A549 (cell line): ENCODE measurements at regions of chr17 and their contacts with region 1.

Region 1: DNA sequence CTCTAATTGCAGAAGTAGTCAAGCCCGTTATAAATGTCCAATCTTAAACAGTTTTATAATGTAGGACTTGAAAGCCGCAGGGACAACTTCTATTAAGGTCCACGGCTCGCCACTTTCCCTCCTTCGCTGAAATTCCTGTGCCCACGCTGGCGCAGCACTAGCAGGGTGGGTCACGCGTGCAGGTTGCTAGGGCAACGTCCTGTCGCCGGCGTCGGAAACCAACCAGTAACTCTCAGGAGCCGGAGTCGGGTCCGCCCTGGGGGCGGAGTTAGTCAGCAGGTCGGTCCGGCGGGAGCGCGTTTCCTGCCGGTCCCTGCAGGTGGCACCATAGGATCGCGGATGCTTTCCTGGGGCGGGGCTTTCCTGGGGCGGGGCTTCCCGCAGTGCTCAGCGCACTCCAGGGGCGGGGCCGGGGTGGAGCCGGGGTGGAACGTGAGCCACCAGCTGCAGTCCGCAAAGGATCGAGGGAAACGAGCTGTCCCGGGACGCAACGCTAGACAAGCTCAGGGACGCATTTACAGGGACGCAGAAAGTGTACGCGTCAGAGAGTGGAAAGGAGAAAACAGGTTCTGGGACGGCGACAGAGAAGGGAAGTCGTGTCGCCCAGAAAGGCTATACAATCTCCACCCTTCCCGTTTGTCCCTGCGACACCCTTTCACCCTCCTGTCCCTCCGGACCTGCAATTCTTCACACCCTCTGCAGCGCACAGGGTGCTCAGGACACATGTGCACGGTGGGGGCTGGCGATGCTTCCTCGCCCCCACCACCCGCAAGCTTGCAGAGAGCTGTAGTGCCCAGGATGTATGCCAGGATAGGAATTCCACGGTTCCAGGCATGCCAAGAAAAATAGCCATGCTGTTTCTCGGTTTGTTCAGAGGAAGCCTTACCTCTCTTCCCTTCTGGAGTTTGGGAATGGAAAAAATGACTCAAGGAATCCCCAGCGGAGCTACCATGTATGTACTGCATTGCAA is 12.4 kb downstream of the COPZ2 start:
- DNase-seq: peak; percentile 95 to 98
- ATAC-seq: peak; percentile 71 to 82
- H3K4me3 ChIP-seq: peak overlapping the region; percentile 43
- H3K27ac ChIP-seq: peak overlapping the region; percentile 71 to 88
- H3K4me1 ChIP-seq: peaks cover 27% of the 10 kb centered on the region
- CTCF ChIP-seq: peak; percentile 96
- EP300 ChIP-seq: no peak
- POLR2A ChIP-seq: peak; percentile 87
- RAD21 ChIP-seq: peak; percentile 96 to 100

Region 2: DNA sequence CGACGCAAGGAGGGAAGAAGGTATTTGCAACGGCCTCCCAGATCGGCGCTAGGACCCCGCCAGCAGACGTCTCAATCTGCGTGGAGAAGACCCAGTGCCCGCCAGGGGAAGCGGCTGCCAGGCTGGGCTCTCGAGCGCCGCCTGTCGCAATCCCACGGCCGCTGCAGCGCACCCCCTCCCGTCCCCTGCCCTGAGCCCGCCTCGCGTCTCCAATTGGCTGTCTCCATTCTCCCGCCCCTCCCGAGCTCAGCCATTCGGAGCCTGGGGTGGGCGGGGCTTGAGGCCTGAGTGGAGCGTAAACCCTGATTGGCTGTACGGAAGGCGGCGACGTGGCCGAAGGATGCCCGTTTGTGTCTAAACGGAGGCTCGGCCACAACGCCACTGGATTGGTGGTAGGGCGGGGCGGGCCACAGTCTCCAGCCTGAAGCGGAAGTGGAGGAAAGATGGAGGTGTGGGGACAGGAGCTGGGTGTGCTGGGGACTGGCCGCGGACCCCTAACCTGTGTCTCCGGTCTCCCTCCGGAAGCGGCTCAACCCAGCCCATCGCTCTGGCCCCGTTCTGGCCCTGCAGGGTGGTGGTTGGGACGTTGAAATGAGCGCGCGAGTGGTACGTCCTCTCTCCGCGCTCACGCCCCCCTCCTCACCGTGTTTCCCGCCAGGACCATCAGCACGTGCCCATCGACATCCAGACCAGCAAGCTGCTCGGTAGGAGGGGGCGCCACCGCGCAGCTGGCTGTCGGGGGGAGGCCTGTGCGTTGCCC is 54.3 kb before region 1 on chr17 and contains the start of gene CDK5RAP3:
- CTCF ChIA-PET with region 1: interaction called, 766 read pairs
- POLR2A ChIA-PET with region 1: interaction called, 5 read pairs
- DNase-seq: peak; percentile 96 to 100
- ATAC-seq: peak; percentile 96 to 97
- H3K4me3 ChIP-seq: peak within 1 kb of the TSS; percentile 77
- H3K27ac ChIP-seq: peak within 1 kb of the TSS; percentile 85 to 90
- H3K4me1 ChIP-seq: peaks cover 47% of the 10 kb centered on the region
- CTCF ChIP-seq: peak; percentile 92
- EP300 ChIP-seq: no peak
- POLR2A ChIP-seq: peak; percentile 88
- RAD21 ChIP-seq: peak; percentile 74 to 89
- polyA plus RNA-seq, gene CDK5RAP3: 124 and 179 TPM in 2 replicates

Region 3: GRCh38 chr17:48047741-48048383 is 22.6 kb after region 1 on chr17 and contains the start of gene NFE2L1:
- CTCF ChIA-PET with region 1: interaction called, 1,398 read pairs
- POLR2A ChIA-PET with region 1: interaction called, 59 read pairs
- DNase-seq: peak; percentile 98 to 100
- ATAC-seq: peak; percentile 90 to 95
- H3K4me3 ChIP-seq: peak within 1 kb of the TSS; percentile 79
- H3K27ac ChIP-seq: peak within 1 kb of the TSS; percentile 95 to 99
- H3K4me1 ChIP-seq: peaks cover 52% of the 10 kb centered on the region
- CTCF ChIP-seq: no peak
- EP300 ChIP-seq: no peak
- POLR2A ChIP-seq: peak; percentile 61
- RAD21 ChIP-seq: no peak
- polyA plus RNA-seq, gene NFE2L1: 241 and 283 TPM in 2 replicates

Region 4: DNA sequence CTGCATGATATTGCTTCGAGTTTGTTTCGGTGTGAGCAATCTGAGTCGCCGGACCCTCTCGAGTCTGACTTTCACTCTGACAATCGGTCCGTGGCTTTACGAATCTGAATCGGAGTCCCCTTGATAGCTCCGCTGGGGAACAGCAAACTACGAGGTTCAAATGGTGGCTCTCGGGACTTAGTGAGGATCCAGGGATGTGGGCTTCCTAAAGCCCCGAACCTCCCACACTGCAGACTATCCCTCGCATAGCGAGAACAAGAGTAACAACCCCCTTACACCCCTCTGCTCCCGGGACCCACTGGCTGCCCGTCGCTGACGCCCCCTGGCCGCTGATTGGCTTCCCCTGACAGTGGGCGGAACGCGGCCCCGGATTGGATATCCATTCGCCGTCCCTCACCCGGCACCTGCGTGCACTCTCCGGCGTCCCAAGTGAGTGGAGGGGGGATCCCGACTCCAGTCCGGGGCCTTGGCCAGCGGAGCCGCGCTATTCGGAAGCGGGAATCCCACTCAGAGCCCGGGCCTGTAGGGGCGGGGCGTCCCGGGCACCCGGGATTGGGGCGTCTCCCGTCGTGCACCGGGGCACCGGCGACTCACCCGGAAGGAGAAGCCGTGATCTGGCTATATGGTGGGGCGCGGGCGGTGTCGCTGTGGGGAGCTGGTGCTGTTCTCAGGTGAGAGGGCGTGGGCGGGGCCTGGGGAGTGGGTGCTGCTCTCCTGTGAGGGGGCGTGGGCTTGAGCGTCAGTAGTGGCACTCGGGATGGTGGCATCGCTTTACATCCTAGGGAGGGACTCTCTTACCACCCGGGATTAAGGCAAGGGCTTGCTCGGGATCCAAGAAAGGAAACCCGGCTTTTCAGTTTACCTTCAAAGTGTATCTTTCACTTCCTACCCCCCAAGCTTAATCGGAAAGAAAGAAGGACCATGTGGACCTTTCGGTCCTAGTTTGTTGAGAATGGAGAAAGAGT is 82.2 kb after region 1 on chr17 and contains the start of gene SNX11:
- CTCF ChIA-PET with region 1: interaction called, 79 read pairs
- POLR2A ChIA-PET with region 1: interaction called, 3 read pairs
- DNase-seq: peak; percentile 90 to 93
- ATAC-seq: peak; percentile 97 to 99
- H3K4me3 ChIP-seq: peak within 1 kb of the TSS; percentile 76
- H3K27ac ChIP-seq: peak within 1 kb of the TSS; percentile 91 to 92
- H3K4me1 ChIP-seq: peaks cover 9% of the 10 kb centered on the region
- CTCF ChIP-seq: no peak
- EP300 ChIP-seq: no peak
- POLR2A ChIP-seq: peak; percentile 78
- RAD21 ChIP-seq: no peak
- polyA plus RNA-seq, gene SNX11: 28.4 and 30.9 TPM in 2 replicates

Region 5: GRCh38 chr17:48148029-48148770 is 123.0 kb after region 1 on chr17:
- CTCF ChIA-PET with region 1: interaction called, 10 read pairs
- POLR2A ChIA-PET with region 1: no interaction called
- DNase-seq: no peak
- ATAC-seq: no peak; a peak in 1 of 6 replicates
- H3K4me3 ChIP-seq: no peak overlapping the region
- H3K27ac ChIP-seq: no peak overlapping the region
- H3K4me1 ChIP-seq: no peaks in the 10 kb centered on the region
- CTCF ChIP-seq: no peak
- EP300 ChIP-seq: no peak
- POLR2A ChIP-seq: no peak
- RAD21 ChIP-seq: no peak

Region 6: GRCh38 chr17:48618256-48618897 is 593.2 kb after region 1 on chr17:
- CTCF ChIA-PET with region 1: interaction called, 20 read pairs
- POLR2A ChIA-PET with region 1: no interaction called
- DNase-seq: peak; percentile 86 to 97
- ATAC-seq: peak; percentile 74 to 78
- H3K4me3 ChIP-seq: no peak overlapping the region
- H3K27ac ChIP-seq: no peak overlapping the region
- H3K4me1 ChIP-seq: peaks cover 12% of the 10 kb centered on the region
- CTCF ChIP-seq: peak; percentile 99
- EP300 ChIP-seq: no peak
- POLR2A ChIP-seq: no peak
- RAD21 ChIP-seq: peak; percentile 97 to 99